Heart left ventricle (tissue), 16 donors: ENCODE measurements at regions of chr1 and their contacts with region 1.

Region 1: GRCh38 chr1:174097426-174097825 is 61.9 kb upstream of the RABGAP1L start:
- DNase-seq: no peak
- ATAC-seq: no peak
- H3K4me3 ChIP-seq: no peak overlapping the region
- H3K27ac ChIP-seq: no peak overlapping the region
- H3K4me1 ChIP-seq: no peaks in the 10 kb centered on the region
- H3K27me3 ChIP-seq: no peaks in the 10 kb centered on the region
- CTCF ChIP-seq: no peak
- POLR2A ChIP-seq: no peak

Region 2: DNA sequence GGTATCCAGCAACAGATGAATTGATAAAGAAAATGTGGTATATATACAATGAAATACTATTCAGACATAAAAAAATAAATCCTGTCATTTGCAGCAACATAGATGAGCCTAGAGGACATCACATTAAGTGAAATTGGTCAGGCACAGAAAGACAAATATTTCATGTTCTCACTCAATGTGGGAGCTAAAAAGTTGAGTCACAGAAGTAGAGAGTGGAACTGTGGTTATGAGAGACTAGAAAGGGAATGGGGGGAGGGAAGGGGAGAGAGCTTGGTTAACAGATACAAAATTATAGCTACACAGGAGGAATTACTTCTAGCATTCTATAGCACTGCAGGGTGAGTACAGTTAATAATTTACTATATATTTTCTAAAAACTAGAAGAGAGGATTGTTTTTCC is 143.2 kb before region 1 on chr1:
- intact Hi-C with region 1: no loop called
- DNase-seq: no peak
- ATAC-seq: no peak
- H3K4me3 ChIP-seq: no peak overlapping the region
- H3K27ac ChIP-seq: no peak overlapping the region
- H3K4me1 ChIP-seq: no peaks in the 10 kb centered on the region
- H3K27me3 ChIP-seq: no peaks in the 10 kb centered on the region
- CTCF ChIP-seq: no peak
- POLR2A ChIP-seq: no peak

Region 3: DNA sequence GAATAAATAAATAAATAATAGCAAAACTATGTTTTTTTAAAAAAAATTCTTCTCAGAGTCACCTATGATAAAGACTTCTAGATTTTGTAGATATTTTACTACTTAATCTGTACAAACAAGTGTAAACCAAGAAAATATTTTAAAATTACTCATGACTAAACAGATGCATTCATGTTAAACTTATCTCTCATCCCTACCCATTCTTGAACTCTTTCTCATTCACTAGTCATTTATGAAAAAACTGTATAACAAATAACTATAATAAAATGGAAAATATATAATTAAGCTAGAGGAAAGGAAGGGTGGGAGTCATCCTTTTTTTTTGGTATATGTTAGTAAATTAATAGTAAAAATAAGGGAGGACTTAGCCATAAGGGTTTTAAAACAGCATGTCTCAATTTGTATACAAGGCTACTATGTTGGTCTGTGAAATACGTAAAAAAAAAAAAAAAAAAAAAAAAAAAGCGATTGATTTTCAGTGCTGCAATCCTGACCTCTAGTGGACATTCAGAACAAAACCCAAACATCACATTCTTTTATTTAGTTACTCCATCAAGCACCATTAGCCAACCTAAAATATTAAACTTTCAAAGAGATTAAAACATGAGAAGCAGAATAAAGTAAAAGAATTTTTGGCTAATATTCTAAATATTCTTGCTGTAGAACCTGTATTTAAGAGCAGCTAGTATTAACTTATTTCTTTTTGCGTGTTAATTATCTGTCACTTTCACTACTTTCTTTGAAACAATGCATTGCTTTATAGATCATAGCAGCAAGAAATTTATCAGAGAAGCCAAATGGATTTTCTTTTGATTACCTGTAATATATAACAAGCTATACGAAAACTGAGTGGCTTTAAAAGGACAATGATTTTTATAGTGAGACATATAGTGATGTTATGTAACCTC is 646.5 kb after region 1 on chr1:
- intact Hi-C with region 1: loop called in 1 of 10 experiments (anchors 10 kb)
- DNase-seq: no peak
- ATAC-seq: peak in 1 of 4 donors; percentile 45
- H3K4me3 ChIP-seq: no peak overlapping the region
- H3K27ac ChIP-seq: no peak overlapping the region
- H3K4me1 ChIP-seq: peaks cover 0 to 13% (median 0%) of the 10 kb centered on the region in 12 donors
- H3K27me3 ChIP-seq: no peaks in the 10 kb centered on the region
- CTCF ChIP-seq: peak; percentile 57 to 82 (median 69)
- POLR2A ChIP-seq: no peak